AG04450 (cell line): ENCODE measurements at regions of chr5 and their contacts with region 1.

Region 1: DNA sequence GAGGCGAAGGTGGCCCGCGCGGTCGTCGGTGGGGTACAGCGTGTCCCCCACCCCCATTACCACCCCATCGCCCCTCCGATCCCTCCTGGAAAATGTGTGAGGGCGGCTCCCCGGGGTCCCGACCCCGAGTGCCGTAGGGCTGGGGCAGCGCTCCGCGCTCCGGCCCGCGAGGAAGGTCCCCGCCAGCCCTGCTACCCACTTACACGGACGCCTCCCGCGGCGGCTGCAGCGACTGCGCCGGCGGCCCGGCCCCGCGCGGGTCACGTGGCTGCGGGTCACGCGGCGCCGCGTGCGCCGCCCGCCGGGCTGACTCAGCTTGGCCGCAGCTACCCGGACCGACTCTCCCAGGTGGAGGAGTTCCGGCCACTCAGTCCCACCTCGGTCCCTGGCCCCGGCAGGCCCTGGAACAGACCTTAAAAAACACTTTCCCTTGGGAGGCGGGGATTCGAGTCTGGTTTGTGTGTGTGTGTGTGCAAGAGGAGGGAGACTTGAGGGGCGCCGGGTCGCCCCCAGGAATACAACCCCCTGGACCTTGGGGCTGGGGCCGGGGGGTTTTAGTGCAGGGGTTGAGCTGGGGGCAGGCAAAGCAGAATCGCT is at the start of gene GNPDA1:
- DNase-seq: peak; percentile 37
- H3K4me3 ChIP-seq: peak within 1 kb of the TSS; percentile 93
- H3K27ac ChIP-seq: peak within 1 kb of the TSS; percentile 65
- H3K27me3 ChIP-seq: no peaks in the 10 kb centered on the region
- CTCF ChIP-seq: no peak
- polyA plus RNA-seq, gene GNPDA1: 26.3 and 33.8 TPM in 2 replicates

Region 2: DNA sequence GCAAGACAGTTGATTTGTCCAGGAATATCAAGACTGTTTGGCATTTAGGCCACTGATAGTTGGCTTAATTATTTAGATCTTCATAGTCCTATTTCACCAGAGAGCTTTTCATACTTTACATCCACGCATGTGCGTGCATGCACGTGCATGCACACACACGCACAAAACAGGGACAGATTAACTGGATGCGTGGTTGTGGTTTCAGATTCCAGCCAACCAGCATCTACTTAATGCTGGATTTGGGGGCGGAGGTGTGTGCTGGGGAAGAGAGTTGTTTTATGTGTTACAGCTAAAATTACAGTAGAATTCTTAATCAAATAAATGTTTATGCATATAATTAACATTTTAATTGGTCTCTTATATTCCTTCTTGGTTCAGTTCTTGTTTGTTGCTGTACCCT is 36.7 kb before region 1 on chr5:
- CTCF ChIA-PET with region 1: interaction called, 10 read pairs
- POLR2A ChIA-PET with region 1: no interaction called
- DNase-seq: no peak
- H3K4me3 ChIP-seq: no peak overlapping the region
- H3K27ac ChIP-seq: no peak overlapping the region
- H3K27me3 ChIP-seq: no peaks in the 10 kb centered on the region
- CTCF ChIP-seq: no peak

Region 3: DNA sequence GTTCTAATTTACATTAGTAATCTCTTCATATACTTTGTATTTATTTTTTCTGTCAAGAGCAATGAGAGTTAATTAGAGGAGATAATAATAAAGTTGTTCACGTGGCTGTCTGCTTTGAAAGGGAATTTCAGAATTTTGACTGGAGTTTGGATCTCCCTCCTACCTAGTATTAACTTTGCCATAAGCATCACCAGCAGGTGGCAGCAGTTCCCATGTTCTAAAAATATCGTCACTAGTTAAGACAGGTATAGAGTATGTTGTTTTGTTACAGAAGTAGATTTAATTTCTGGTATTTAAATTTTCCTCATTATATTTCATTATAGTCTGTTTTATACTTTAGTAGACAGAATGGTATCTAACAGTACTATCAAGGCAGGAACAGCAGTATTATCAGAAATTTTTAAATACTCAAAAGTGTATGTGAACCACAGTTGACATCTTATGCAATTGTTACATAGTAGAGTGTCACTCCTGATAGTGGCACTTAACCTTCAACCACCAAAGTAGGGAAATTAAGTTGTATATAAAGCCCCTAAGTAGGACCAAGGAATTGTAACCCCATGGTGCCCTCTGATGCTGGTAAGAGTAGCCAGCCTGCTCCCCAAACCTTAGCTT is 20.4 kb before region 1 on chr5:
- CTCF ChIA-PET with region 1: interaction called, 15 read pairs
- POLR2A ChIA-PET with region 1: interaction called, 4 read pairs
- DNase-seq: no peak
- H3K4me3 ChIP-seq: no peak overlapping the region
- H3K27ac ChIP-seq: no peak overlapping the region
- H3K27me3 ChIP-seq: no peaks in the 10 kb centered on the region
- CTCF ChIP-seq: peak; percentile 75

Region 4: GRCh38 chr5:142024771-142025304 is 11.9 kb after region 1 on chr5:
- CTCF ChIA-PET with region 1: interaction called, 35 read pairs
- POLR2A ChIA-PET with region 1: interaction called, 4 read pairs
- DNase-seq: peak; percentile 52
- H3K4me3 ChIP-seq: peak overlapping the region; percentile 62
- H3K27ac ChIP-seq: peak overlapping the region; percentile 89
- H3K27me3 ChIP-seq: peaks cover 6% of the 10 kb centered on the region
- CTCF ChIP-seq: no peak

Region 5: GRCh38 chr5:142053426-142054151 is 40.7 kb after region 1 on chr5:
- CTCF ChIA-PET with region 1: no interaction called
- POLR2A ChIA-PET with region 1: no interaction called
- DNase-seq: no peak
- H3K4me3 ChIP-seq: no peak overlapping the region
- H3K27ac ChIP-seq: no peak overlapping the region
- H3K27me3 ChIP-seq: peaks cover 9% of the 10 kb centered on the region
- CTCF ChIP-seq: no peak

Region 6: DNA sequence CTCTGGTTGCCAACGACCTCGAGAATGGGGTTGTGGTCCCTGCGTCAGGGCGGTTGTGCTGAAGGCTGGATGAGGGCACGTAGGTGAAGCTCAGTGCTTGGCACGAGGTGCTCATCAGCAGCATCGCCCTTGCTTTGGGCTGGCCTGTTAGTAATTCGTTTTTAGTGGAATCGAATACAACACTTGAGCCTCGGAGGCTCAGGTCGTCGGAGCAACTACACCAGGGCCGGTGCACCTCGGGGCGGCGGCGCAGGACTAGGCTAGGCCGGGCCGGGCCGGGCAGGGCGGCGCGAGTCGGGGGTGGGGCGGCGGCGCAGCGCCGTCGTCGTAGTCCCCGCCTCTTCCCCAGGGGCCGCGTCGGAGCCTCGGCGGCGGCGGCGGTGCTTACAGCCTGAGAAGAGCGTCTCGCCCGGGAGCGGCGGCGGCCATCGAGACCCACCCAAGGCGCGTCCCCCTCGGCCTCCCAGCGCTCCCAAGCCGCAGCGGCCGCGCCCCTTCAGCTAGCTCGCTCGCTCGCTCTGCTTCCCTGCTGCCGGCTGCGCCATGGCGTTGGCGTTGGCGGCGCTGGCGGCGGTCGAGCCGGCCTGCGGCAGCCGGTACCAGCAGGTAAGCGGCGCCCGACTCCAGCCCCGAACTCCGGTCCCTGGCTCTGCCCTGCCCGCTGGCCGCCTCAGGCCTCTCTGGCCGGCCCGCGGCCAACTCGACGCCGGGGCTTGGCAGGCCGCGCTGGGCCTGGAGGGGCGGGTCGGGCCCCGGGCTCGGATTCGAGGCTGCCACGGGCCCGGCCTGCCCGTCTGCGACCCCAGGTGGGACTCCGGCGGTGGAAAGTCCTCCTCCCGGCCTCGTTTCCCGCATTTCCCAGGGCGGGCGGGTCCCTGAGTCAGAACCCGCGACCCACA is 95.8 kb after region 1 on chr5 and contains the start of gene NDFIP1:
- CTCF ChIA-PET with region 1: interaction called, 12 read pairs
- POLR2A ChIA-PET with region 1: interaction called, 3 read pairs
- DNase-seq: no peak
- H3K4me3 ChIP-seq: peak within 1 kb of the TSS; percentile 78
- H3K27ac ChIP-seq: peak within 1 kb of the TSS; percentile 74
- H3K27me3 ChIP-seq: no peaks in the 10 kb centered on the region
- CTCF ChIP-seq: no peak
- polyA plus RNA-seq, gene NDFIP1: 23.2 and 31.9 TPM in 2 replicates

Region 7: GRCh38 chr5:142145106-142145900 is 132.4 kb after region 1 on chr5:
- CTCF ChIA-PET with region 1: interaction called, 84 read pairs
- POLR2A ChIA-PET with region 1: interaction called, 3 read pairs
- DNase-seq: peak; percentile 16
- H3K4me3 ChIP-seq: no peak overlapping the region
- H3K27ac ChIP-seq: no peak overlapping the region
- H3K27me3 ChIP-seq: no peaks in the 10 kb centered on the region
- CTCF ChIP-seq: peak; percentile 81